ENCODE measurements at regions of chr4 and their contacts with region 1.

Region 1: DNA sequence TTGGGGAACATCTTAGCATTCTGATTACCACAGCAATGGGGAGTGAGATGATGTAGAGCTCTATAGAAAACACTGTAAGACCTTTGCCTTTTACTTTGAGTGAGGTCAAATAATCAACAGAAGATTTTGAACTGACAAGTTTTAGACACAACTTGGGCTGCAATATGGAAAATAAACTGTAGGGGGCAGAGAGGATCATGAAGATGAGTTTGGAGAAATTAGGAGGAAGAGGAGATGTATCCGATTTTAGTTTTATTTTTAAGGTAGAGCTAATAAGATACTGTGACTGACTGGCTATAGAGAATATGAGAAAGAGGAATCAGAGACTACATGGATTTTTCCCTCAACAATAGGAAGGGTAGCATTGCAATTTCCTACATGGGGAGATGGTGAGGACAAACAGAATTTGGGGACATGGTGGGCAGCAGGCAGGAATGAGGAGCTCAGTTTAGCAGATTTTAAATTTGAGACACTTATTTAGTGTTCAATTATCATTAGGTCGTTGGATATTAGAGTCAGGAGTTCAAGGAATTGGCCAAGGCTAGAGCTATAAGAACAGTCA is 563.1 kb downstream of the INPP4B start:
- DNase-seq: no peak
- H3K4me3 Mint-ChIP-seq: no peak overlapping the region
- H3K27ac Mint-ChIP-seq: no peak overlapping the region
- H3K4me1 Mint-ChIP-seq: peaks cover 26% of the 10 kb centered on the region
- H3K27me3 Mint-ChIP-seq: no peaks in the 10 kb centered on the region

Region 2: DNA sequence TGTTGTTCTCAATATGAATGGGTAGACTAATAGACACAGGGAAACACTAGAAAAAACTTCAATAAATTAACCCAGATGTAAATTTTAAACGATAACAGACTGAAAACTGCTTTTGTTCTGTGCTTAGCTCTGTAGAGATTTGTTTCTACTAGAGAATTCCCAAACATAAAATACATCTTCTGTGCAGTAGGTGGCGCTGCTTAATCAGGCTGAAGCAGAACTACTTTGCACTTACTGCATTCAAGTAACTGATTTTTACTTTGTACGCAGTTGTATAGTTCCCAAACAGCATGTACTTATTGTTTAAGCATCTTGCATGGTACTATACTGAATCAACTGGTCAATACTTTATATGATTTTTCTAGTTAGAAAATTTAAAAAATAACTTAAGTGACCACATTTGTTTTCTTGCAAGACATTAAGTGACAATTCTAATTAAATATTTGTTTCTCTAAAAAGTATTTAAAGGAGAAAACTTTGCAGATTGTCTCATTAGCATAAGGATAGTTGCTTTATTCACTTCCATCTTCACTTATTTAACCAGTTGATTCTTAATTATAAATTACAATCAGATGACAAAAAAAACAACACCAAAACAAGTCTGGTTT is 156.0 kb before region 1 on chr4:
- CTCF ChIA-PET with region 1: no interaction called
- POLR2A ChIA-PET with region 1: no interaction called
- intact Hi-C with region 1: loop called (anchors 5 kb)
- DNase-seq: peak; percentile 68
- H3K4me3 Mint-ChIP-seq: no peak overlapping the region
- H3K27ac Mint-ChIP-seq: no peak overlapping the region
- H3K4me1 Mint-ChIP-seq: peaks cover 26% of the 10 kb centered on the region
- H3K27me3 Mint-ChIP-seq: no peaks in the 10 kb centered on the region

Region 3: GRCh38 chr4:142293536-142293935 is 10.6 kb after region 1 on chr4:
- CTCF ChIA-PET with region 1: interaction called, 14 read pairs
- POLR2A ChIA-PET with region 1: no interaction called
- intact Hi-C with region 1: loop called (anchors 1 kb)
- DNase-seq: no peak
- H3K4me3 Mint-ChIP-seq: no peak overlapping the region
- H3K27ac Mint-ChIP-seq: peak overlapping the region; percentile 32
- H3K4me1 Mint-ChIP-seq: peaks cover 76% of the 10 kb centered on the region
- H3K27me3 Mint-ChIP-seq: no peaks in the 10 kb centered on the region

Region 4: GRCh38 chr4:142316025-142316424 is 33.1 kb after region 1 on chr4:
- CTCF ChIA-PET with region 1: no interaction called
- POLR2A ChIA-PET with region 1: no interaction called
- intact Hi-C with region 1: no loop called
- DNase-seq: no peak
- H3K4me3 Mint-ChIP-seq: no peak overlapping the region
- H3K27ac Mint-ChIP-seq: no peak overlapping the region
- H3K4me1 Mint-ChIP-seq: peaks cover 79% of the 10 kb centered on the region
- H3K27me3 Mint-ChIP-seq: no peaks in the 10 kb centered on the region

Region 5: GRCh38 chr4:142719854-142720541 is 437.0 kb after region 1 on chr4:
- CTCF ChIA-PET with region 1: interaction called, 8 read pairs
- POLR2A ChIA-PET with region 1: no interaction called
- intact Hi-C with region 1: loop called (anchors 1 kb)
- DNase-seq: no peak
- H3K4me3 Mint-ChIP-seq: no peak overlapping the region
- H3K27ac Mint-ChIP-seq: peak overlapping the region; percentile 69
- H3K4me1 Mint-ChIP-seq: peaks cover 28% of the 10 kb centered on the region
- H3K27me3 Mint-ChIP-seq: no peaks in the 10 kb centered on the region

Region 6: DNA sequence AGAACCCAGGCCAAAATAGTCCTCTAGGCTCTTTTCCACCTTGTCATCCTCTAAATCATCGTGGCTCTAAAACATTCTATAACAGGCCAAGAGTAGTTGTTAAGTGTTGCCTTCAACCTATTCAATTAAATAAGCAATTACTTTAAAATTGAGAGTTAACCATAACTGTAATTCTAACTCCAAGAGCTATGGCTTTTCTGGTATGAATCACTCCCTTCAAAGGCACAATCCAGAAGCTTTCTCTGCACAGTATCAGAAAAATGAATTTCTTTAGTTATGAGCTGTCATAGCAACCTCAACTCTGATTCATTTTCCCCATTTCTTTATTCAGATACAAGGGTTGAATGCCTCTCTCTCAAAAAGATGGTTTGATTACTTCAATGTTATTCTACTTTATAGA is 541.4 kb after region 1 on chr4:
- CTCF ChIA-PET with region 1: interaction called, 4 read pairs
- POLR2A ChIA-PET with region 1: no interaction called
- intact Hi-C with region 1: loop called (anchors 5 kb)
- DNase-seq: no peak
- H3K4me3 Mint-ChIP-seq: no peak overlapping the region
- H3K27ac Mint-ChIP-seq: no peak overlapping the region
- H3K4me1 Mint-ChIP-seq: peaks cover 15% of the 10 kb centered on the region
- H3K27me3 Mint-ChIP-seq: peaks cover 14% of the 10 kb centered on the region

Region 7: DNA sequence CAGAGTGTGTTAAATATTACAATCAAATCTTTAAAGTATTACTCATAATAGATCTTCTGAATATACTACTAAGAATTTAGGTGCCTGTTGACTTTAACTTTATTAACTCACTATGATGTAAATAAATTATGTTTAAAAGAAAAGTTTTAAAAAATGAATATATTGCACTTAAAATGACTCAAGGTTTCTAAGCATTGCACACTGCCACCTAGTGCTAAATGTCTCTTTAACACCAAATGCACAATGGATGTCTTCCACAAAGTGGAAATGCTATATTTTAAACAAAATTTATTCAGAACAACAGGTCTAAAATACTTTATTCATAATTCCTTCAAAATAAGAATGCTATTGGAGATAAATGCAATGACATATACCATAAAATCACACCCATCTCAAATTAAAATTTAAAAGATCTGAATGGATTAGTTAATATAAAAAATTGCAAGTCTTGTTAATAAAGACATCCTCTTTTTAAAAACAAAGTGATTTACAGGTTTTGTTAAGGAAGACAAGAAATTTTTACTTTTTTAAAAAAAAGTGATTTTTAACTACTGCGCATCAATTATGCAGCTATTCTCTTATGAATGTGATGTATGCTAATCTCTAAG is 557.7 kb after region 1 on chr4:
- CTCF ChIA-PET with region 1: interaction called, 5 read pairs
- POLR2A ChIA-PET with region 1: no interaction called
- intact Hi-C with region 1: loop called (anchors 2 kb)
- DNase-seq: no peak
- H3K4me3 Mint-ChIP-seq: no peak overlapping the region
- H3K27ac Mint-ChIP-seq: no peak overlapping the region
- H3K4me1 Mint-ChIP-seq: peaks cover 21% of the 10 kb centered on the region
- H3K27me3 Mint-ChIP-seq: peaks cover 2% of the 10 kb centered on the region